AG04450 (cell line): ENCODE measurements at regions of chr1 and their contacts with region 1.

Region 1: GRCh38 chr1:212070720-212071302 is 35.3 kb downstream of the DTL start:
- DNase-seq: peak; percentile 8
- H3K4me3 ChIP-seq: no peak overlapping the region
- H3K27ac ChIP-seq: no peak overlapping the region
- H3K27me3 ChIP-seq: no peaks in the 10 kb centered on the region
- CTCF ChIP-seq: peak; percentile 79

Region 2: GRCh38 chr1:211843018-211843417 is 227.8 kb before region 1 on chr1:
- CTCF ChIA-PET with region 1: no interaction called
- POLR2A ChIA-PET with region 1: no interaction called
- DNase-seq: no peak
- H3K4me3 ChIP-seq: no peak overlapping the region
- H3K27ac ChIP-seq: no peak overlapping the region
- H3K27me3 ChIP-seq: peaks cover 5% of the 10 kb centered on the region
- CTCF ChIP-seq: no peak

Region 3: GRCh38 chr1:212035123-212035834 is 35.5 kb before region 1 on chr1 and contains the starts of genes DTL and INTS7:
- CTCF ChIA-PET with region 1: interaction called, 25 read pairs
- POLR2A ChIA-PET with region 1: no interaction called
- DNase-seq: peak; percentile 98
- H3K4me3 ChIP-seq: peak within 1 kb of the TSS; percentile 90
- H3K27ac ChIP-seq: peak within 1 kb of the TSS; percentile 59
- H3K27me3 ChIP-seq: no peaks in the 10 kb centered on the region
- CTCF ChIP-seq: peak; percentile 89
- polyA plus RNA-seq, gene DTL: 4.0 and 6.0 TPM in 2 replicates
- polyA plus RNA-seq, gene INTS7: 17.9 and 20.1 TPM in 2 replicates

Region 4: GRCh38 chr1:212104586-212105325 is 33.9 kb after region 1 on chr1:
- CTCF ChIA-PET with region 1: interaction called, 17 read pairs
- POLR2A ChIA-PET with region 1: no interaction called
- DNase-seq: no peak
- H3K4me3 ChIP-seq: no peak overlapping the region
- H3K27ac ChIP-seq: no peak overlapping the region
- H3K27me3 ChIP-seq: no peaks in the 10 kb centered on the region
- CTCF ChIP-seq: no peak

Region 5: DNA sequence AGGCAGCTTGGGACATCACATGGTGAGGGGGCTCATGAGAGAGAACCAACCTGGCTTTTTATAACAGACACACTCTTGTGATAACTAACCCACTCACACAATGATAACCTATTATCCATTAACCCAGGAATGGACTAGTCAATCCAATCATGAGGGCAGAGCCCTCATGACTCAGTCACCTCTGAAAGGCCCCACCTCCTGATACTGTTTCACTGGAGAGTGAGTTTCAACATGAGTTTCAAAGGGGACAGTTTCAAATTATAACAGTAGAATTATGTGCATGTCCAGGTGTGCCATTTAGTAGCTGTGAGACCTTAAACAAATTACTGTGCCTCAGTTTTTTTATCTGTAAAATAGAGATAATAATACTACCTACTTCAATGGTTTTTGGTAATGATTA is 166.8 kb after region 1 on chr1:
- CTCF ChIA-PET with region 1: interaction called, 12 read pairs
- POLR2A ChIA-PET with region 1: no interaction called
- DNase-seq: no peak
- H3K4me3 ChIP-seq: no peak overlapping the region
- H3K27ac ChIP-seq: no peak overlapping the region
- H3K27me3 ChIP-seq: no peaks in the 10 kb centered on the region
- CTCF ChIP-seq: no peak

Region 6: DNA sequence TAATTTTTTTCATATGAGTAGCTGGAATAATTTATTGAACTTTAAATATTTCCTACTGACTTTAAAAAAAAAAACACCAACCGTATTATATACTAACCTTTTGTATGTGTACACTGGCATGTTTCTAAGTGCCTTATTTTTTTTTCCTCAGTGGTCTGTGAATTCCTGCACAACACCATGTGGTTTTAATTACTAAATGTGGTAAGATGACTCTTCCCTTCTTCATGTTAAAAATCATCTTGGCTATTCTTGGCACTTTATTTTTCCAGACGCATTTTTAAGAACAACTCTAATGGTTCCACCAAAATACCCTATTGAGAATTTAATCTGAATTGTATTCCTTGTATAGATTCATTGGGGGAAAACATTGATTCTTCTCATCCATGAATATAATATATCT is 242.8 kb after region 1 on chr1:
- CTCF ChIA-PET with region 1: interaction called, 45 read pairs
- POLR2A ChIA-PET with region 1: no interaction called
- DNase-seq: no peak
- H3K4me3 ChIP-seq: no peak overlapping the region
- H3K27ac ChIP-seq: no peak overlapping the region
- H3K27me3 ChIP-seq: no peaks in the 10 kb centered on the region
- CTCF ChIP-seq: no peak

Region 7: DNA sequence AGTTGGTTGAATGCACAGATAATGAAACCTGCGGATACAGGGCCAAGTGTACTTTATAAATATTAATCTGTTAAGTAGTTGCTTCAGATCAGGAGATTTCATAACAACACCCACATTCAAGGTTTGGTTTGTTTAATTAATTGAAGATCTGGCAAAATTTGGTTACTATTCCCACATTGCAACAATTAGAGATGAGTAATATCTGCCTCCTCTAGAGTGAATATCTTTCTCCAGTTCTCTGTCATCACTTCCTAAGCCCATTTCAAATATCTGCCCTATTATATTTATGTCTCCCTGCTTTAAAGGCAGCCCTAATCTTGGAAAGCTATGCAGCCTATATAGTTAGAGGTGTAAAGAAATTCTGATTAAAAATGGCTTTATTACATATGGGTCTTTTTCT is 275.8 kb after region 1 on chr1:
- CTCF ChIA-PET with region 1: interaction called, 27 read pairs
- POLR2A ChIA-PET with region 1: interaction called, 3 read pairs
- DNase-seq: no peak
- H3K4me3 ChIP-seq: no peak overlapping the region
- H3K27ac ChIP-seq: no peak overlapping the region
- H3K27me3 ChIP-seq: no peaks in the 10 kb centered on the region
- CTCF ChIP-seq: no peak

Region 8: GRCh38 chr1:212433577-212434462 is 363.0 kb after region 1 on chr1:
- CTCF ChIA-PET with region 1: interaction called, 11 read pairs
- POLR2A ChIA-PET with region 1: no interaction called
- DNase-seq: no peak
- H3K4me3 ChIP-seq: peak overlapping the region; percentile 72
- H3K27ac ChIP-seq: no peak overlapping the region
- H3K27me3 ChIP-seq: no peaks in the 10 kb centered on the region
- CTCF ChIP-seq: no peak